Gastrocnemius medialis (tissue), 4 donors: ENCODE measurements at regions of chr1 and their contacts with region 1.

Region 1: DNA sequence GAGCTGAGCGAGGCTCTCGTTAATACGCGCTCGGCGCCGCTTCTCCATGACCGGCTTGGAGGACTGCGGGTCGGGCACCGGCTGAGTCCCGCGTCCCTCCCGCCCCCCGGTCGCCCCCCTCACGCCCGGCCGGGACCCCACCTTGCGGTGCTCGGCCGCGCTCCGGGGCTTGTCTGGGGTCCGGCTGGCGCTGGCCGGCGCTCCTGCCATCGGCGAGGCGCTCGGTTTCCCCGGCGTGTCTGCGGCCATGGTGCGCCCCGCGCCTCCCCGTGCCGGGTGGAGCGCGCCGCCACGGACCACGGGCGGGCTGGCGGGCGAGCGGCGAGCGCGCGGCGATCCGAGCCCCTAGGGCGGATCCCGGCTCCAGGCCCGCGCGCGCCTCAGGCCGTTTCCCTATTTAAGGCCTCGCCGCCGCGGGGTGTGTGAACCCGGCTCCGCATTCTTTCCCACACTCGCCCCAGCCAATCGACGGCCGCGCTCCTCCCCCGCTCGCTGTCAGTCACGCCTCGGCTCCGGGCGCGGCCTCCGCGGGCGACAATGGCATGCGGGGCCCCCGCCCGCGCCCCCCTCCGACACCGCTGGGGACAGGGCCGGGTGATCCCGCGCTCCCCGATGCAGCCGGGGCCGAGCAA is at the start of gene HES4:
- DNase-seq: peak; percentile 73 to 76
- ATAC-seq: peak; percentile 68 to 76
- H3K4me3 ChIP-seq: peak within 1 kb of the TSS; percentile 57 to 85 (median 71)
- H3K27ac ChIP-seq: peak within 1 kb of the TSS; percentile 84 to 92 (median 89)
- H3K4me1 ChIP-seq: peaks cover 4 to 8% of the 10 kb centered on the region in 2 donors
- H3K27me3 ChIP-seq: peaks cover 4 to 11% (median 7%) of the 10 kb centered on the region in 3 donors
- CTCF ChIP-seq: no peak
- POLR2A ChIP-seq: peak; percentile 85 to 93
- total RNA-seq, gene HES4: 6.4 to 17.4 (median 9.5) TPM

Region 2: GRCh38 chr1:921011-921837 is 78.6 kb before region 1 on chr1:
- in situ Hi-C with region 1: no loop called
- intact Hi-C with region 1: loop called (anchors 5 kb)
- DNase-seq: peak in 1 of 2 donors; percentile 51
- ATAC-seq: peak; percentile 59 to 60
- H3K4me3 ChIP-seq: peak overlapping the region in 1 of 4 donors; percentile 7
- H3K27ac ChIP-seq: no peak overlapping the region
- H3K4me1 ChIP-seq: peaks cover 15 to 32% of the 10 kb centered on the region in 2 donors
- H3K27me3 ChIP-seq: peaks cover 16 to 52% (median 25%) of the 10 kb centered on the region in 3 donors
- CTCF ChIP-seq: peak; percentile 34 to 74 (median 55)
- POLR2A ChIP-seq: no peak

Region 3: GRCh38 chr1:983799-984473 is 15.9 kb before region 1 on chr1:
- in situ Hi-C with region 1: no loop called
- intact Hi-C with region 1: loop called (anchors 1 kb)
- DNase-seq: peak in 1 of 2 donors; percentile 60
- ATAC-seq: no peak
- H3K4me3 ChIP-seq: peak overlapping the region in 3 of 4 donors; percentile 37 to 39 (median 37)
- H3K27ac ChIP-seq: peak overlapping the region; percentile 100
- H3K4me1 ChIP-seq: peaks cover 21 to 27% of the 10 kb centered on the region in 2 donors
- H3K27me3 ChIP-seq: no peaks in the 10 kb centered on the region
- CTCF ChIP-seq: peak; percentile 49 to 99 (median 75)
- POLR2A ChIP-seq: no peak

Region 4: GRCh38 chr1:1013105-1013921 is 13.5 kb after region 1 on chr1 and contains the start of gene ISG15:
- in situ Hi-C with region 1: no loop called
- intact Hi-C with region 1: loop called (anchors 1 kb)
- DNase-seq: peak; percentile 73 to 86
- ATAC-seq: peak; percentile 90 to 95
- H3K4me3 ChIP-seq: peak within 1 kb of the TSS; percentile 71 to 84 (median 75)
- H3K27ac ChIP-seq: peak within 1 kb of the TSS; percentile 81 to 86 (median 84)
- H3K4me1 ChIP-seq: peaks cover 0 to 10% of the 10 kb centered on the region in 2 donors
- H3K27me3 ChIP-seq: no peaks in the 10 kb centered on the region
- CTCF ChIP-seq: no peak
- POLR2A ChIP-seq: peak; percentile 66 to 85
- total RNA-seq, gene ISG15: 4.3 to 37.6 (median 10.2) TPM

Region 5: GRCh38 chr1:1019122-1019999 is 19.5 kb after region 1 on chr1:
- in situ Hi-C with region 1: no loop called
- intact Hi-C with region 1: loop called (anchors 2 kb)
- DNase-seq: peak; percentile 68 to 77
- ATAC-seq: peak; percentile 89 to 91
- H3K4me3 ChIP-seq: peak overlapping the region; percentile 51 to 77 (median 63)
- H3K27ac ChIP-seq: peak overlapping the region; percentile 73 to 90 (median 87)
- H3K4me1 ChIP-seq: peaks cover 3 to 9% of the 10 kb centered on the region in 2 donors
- H3K27me3 ChIP-seq: peaks cover 6 to 10% (median 10%) of the 10 kb centered on the region in 3 donors
- CTCF ChIP-seq: peak; percentile 13 to 83 (median 53)
- POLR2A ChIP-seq: peak; percentile 8 to 37

Region 6: GRCh38 chr1:1225238-1225845 is 225.5 kb after region 1 on chr1:
- in situ Hi-C with region 1: no loop called
- intact Hi-C with region 1: no loop called
- DNase-seq: no peak
- ATAC-seq: no peak
- H3K4me3 ChIP-seq: no peak overlapping the region
- H3K27ac ChIP-seq: no peak overlapping the region
- H3K4me1 ChIP-seq: peaks cover 10 to 21% of the 10 kb centered on the region in 2 donors
- H3K27me3 ChIP-seq: no peaks in the 10 kb centered on the region
- CTCF ChIP-seq: no peak
- POLR2A ChIP-seq: no peak